PC-3 (cell line): ENCODE measurements at regions of chr18 and their contacts with region 1.

Region 1: GRCh38 chr18:3321133-3321812 is 59.3 kb downstream of the MYL12B start:
- DNase-seq: peak; percentile 97
- ATAC-seq: peak; percentile 68
- H3K4me3 ChIP-seq: no peak overlapping the region
- H3K27ac ChIP-seq: peak overlapping the region; percentile 69
- H3K4me1 ChIP-seq: peaks cover 36% of the 10 kb centered on the region
- H3K27me3 ChIP-seq: no peaks in the 10 kb centered on the region
- CTCF ChIP-seq: no peak

Region 2: DNA sequence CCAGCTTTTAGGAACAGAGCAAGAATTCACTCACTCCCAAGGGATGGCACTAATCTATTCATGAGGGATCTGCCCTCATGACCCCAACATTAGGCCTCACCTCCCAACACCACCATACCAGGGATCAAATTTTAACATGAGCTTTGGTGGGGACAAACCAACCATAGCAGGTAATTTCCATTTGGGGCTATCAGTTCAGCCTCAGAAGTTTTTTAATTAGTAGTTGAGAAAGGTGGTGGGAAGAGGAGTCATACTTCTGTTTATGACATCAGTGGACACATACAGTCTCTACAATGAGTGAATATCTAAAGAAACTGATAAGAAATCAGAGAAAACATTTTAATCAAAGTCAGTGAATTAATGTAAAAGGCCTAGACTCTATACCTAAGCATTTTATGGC is 534.0 kb before region 1 on chr18:
- CTCF ChIA-PET with region 1: no interaction called
- POLR2A ChIA-PET with region 1: no interaction called
- intact Hi-C with region 1: no loop called
- DNase-seq: no peak
- ATAC-seq: no peak
- H3K4me3 ChIP-seq: no peak overlapping the region
- H3K27ac ChIP-seq: no peak overlapping the region
- H3K4me1 ChIP-seq: no peaks in the 10 kb centered on the region
- H3K27me3 ChIP-seq: no peaks in the 10 kb centered on the region
- CTCF ChIP-seq: no peak

Region 3: DNA sequence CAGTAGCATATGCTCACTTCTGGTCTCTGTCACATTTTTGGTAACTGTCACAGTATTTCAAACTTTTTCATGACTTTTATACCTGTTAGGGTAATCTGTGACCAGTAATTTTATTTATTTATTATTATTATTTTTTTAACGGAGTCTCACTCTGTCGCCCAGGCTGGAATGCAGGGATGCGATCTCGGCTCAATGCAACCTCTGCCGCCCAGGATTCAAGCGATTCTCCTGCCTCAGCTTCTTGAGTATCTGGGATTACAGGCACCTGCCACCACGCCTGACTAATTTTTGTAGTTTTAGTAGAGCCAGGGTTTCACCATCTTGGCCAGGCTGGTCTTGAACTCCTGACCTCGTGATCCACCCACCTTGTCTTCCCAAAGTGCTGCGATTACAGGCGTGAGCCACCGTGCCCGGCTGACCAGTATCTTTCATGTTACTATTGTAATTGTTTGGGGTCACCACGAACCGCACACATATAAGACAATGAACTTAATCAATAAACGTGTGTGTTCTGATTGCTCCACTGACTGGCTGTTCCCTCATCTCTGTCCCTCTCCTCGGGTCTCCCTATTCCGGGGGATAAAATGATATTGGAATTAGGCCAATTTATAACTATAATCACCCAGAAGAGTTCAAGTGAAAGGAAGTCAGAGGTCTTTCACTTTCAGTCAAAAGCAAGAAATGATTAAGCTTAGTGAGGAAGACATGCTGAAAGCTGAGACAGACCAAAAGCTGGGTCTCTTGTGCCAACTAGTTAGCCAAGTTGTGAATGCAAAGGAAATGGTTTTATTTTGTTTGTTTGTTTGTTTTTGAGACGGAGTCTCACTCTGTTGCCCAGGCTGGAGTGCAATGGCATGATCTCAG is 151.6 kb after region 1 on chr18:
- CTCF ChIA-PET with region 1: interaction called, 10 read pairs
- POLR2A ChIA-PET with region 1: no interaction called
- intact Hi-C with region 1: no loop called
- DNase-seq: no peak
- ATAC-seq: no peak
- H3K4me3 ChIP-seq: no peak overlapping the region
- H3K27ac ChIP-seq: no peak overlapping the region
- H3K4me1 ChIP-seq: no peaks in the 10 kb centered on the region
- H3K27me3 ChIP-seq: no peaks in the 10 kb centered on the region
- CTCF ChIP-seq: no peak